A673 (cell line): ENCODE measurements at regions of chr17 and their contacts with region 1.

Region 1: GRCh38 chr17:82037113-82037888 is at the start of gene DCXR:
- DNase-seq: peak; percentile 99
- H3K4me3 ChIP-seq: peak within 1 kb of the TSS; percentile 95
- H3K27ac ChIP-seq: peak within 1 kb of the TSS; percentile 92
- H3K4me1 ChIP-seq: peaks cover 11% of the 10 kb centered on the region
- H3K27me3 ChIP-seq: no peaks in the 10 kb centered on the region
- CTCF ChIP-seq: peak; percentile 72
- total RNA-seq, gene DCXR: 140 and 191 TPM in 2 replicates

Region 2: DNA sequence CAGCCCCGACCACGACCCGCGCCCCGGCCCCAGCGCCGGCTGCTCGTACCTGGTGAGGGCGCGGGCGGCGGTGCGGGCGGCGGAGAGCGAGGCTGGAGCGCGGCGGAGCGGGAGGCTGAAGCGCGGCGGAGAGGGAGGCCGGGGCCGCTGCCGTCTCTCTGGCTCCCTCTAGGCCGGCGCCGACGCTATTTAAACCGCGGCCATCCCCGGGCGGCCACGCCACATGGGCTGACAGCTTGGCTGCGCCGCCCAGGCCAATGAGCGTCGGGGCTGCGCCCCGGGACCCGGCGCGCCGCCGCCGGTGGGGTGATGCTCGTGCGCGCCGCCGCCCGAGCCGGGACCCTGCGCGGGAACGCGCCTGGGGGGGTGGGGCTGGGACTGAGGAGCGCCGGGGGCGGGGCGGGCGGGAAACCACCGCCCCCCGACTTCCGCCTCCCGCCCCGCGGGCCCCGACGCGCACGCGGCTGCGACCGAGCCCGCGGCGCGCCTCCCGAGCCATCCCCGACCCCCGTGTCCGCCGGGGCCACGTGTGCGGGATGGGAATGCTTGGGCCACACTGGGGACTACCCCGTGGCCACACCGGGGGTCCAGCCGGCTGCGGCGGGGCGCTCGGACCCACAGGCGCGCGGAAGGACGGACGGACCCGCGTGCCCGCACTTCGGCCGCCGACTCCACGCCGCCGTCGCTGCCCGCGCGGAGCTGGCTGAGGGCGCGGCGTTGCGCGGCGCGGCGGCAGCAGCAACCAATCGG is 60.9 kb after region 1 on chr17 and contains the start of gene FASN:
- CTCF ChIA-PET with region 1: no interaction called
- POLR2A ChIA-PET with region 1: interaction called, 3 read pairs
- intact Hi-C with region 1: loop called (anchors 5 kb)
- DNase-seq: peak; percentile 98
- H3K4me3 ChIP-seq: peak within 1 kb of the TSS; percentile 99
- H3K27ac ChIP-seq: peak within 1 kb of the TSS; percentile 99
- H3K4me1 ChIP-seq: peaks cover 22% of the 10 kb centered on the region
- H3K27me3 ChIP-seq: no peaks in the 10 kb centered on the region
- CTCF ChIP-seq: peak; percentile 44; the same call in 1 of the 2 replicates
- total RNA-seq, gene FASN: 591 and 676 TPM in 2 replicates